ENCODE measurements at regions of chr12 and their contacts with region 1.

Region 1: DNA sequence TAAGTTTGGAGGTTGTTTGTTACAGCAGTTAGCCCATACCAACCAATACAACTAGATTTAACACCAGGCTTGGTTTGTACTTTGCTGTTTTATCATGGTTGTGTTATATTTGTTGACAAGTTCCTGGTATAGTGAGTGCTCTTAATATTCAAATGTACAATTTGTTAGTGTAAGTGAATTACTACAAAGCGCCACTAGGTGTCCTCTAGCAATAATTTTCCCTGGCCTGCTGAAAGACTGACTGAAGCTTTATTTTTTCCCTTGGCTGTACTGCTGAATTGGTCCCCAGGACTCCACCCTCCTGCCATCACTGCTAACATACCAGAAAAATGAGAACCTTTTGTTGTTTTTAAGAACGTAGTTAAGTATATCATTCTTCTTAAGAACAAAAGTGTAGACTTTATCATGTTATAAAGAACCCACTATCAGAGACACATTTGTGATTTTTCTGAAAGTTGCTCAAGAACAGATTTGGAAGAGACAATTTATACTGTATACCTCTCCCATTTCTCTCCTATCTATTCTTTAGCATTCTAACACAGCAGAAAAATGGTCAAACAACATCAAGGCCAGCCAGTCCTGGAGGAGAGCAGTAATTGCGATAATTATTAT is 75.3 kb upstream of the FAR2 start:
- DNase-seq: peak; percentile 27
- H3K4me3 ChIP-seq: no peak overlapping the region
- CTCF ChIP-seq: peak; percentile 64

Region 2: DNA sequence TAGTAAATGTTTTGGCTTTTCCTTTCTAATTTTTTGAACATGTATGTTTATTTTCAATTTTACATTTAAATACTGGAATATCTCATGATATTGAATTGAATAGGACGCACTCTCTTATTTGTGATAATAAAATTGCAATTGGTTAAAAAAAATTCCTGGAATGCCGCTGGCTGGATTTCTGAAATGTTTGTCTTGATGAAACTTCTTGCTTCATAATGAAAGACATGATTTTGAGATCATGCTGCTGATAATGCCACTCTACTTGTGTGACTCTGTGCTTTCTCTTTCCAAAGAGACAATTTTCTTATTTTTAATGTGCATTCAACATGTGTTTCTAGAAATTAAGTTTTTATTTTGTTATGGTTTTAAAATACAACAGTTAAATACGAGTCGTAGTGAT is 390.4 kb before region 1 on chr12:
- in situ Hi-C with region 1: no loop called
- DNase-seq: no peak
- H3K4me3 ChIP-seq: no peak overlapping the region
- CTCF ChIP-seq: no peak

Region 3: DNA sequence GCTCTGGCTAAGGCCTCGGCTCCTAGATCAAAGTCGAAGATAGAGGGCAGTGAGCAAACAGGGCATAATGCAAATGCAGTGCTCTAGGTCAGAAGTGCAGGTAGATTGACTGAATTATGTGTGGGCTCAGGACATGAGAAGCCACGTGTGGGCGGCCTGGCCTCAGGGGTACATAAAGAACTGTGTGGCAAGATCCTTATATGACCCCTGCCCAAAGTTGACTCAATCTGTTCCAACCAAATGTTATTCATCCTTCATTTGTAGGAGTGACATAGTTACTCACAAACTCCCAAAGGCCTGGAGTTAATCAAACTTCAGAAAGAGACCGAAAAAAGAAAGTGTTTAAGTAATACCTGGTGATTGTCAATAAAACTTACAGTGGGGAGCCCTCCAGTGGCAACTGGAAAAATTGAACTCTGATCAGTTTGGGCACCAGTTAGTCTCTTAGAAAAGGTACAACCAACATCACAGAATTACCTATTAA is 75.1 kb before region 1 on chr12:
- in situ Hi-C with region 1: no loop called
- DNase-seq: peak; percentile 22
- H3K4me3 ChIP-seq: no peak overlapping the region
- CTCF ChIP-seq: peak; percentile 62

Region 4: GRCh38 chr12:29116414-29116813 is 42.7 kb after region 1 on chr12:
- in situ Hi-C with region 1: loop called (anchors 5 kb)
- DNase-seq: no peak
- H3K4me3 ChIP-seq: no peak overlapping the region
- CTCF ChIP-seq: no peak

Region 5: GRCh38 chr12:29147731-29148595 is 74.2 kb after region 1 on chr12:
- in situ Hi-C with region 1: no loop called
- DNase-seq: no peak
- H3K4me3 ChIP-seq: peak overlapping the region; percentile 86
- CTCF ChIP-seq: no peak